Activated naive CD4-positive, alpha-beta T cell treated with anti-CD3 and anti-CD28 coated beads, Interleukin-2, amount 10 ng/mL, durations not matched to agents 7 days and 5 days (primary cell): ENCODE measurements at regions of chr1 and their contacts with region 1.

Region 1: GRCh38 chr1:225441314-225442122 is 13.7 kb upstream of the LBR start:
- DNase-seq: peak; percentile 41
- H3K4me3 Mint-ChIP-seq: peak overlapping the region; percentile 48
- H3K27ac Mint-ChIP-seq: peak overlapping the region; percentile 89
- H3K4me1 Mint-ChIP-seq: peaks cover 62% of the 10 kb centered on the region
- H3K27me3 Mint-ChIP-seq: peaks cover 3% of the 10 kb centered on the region

Region 2: GRCh38 chr1:225191199-225191753 is 250.2 kb before region 1 on chr1:
- CTCF ChIA-PET with region 1: no interaction called
- DNase-seq: no peak
- H3K4me3 Mint-ChIP-seq: no peak overlapping the region
- H3K27ac Mint-ChIP-seq: no peak overlapping the region
- H3K4me1 Mint-ChIP-seq: no peaks in the 10 kb centered on the region
- H3K27me3 Mint-ChIP-seq: no peaks in the 10 kb centered on the region

Region 3: GRCh38 chr1:225354906-225355305 is 86.6 kb before region 1 on chr1:
- CTCF ChIA-PET with region 1: no interaction called
- DNase-seq: no peak
- H3K4me3 Mint-ChIP-seq: no peak overlapping the region
- H3K27ac Mint-ChIP-seq: no peak overlapping the region
- H3K4me1 Mint-ChIP-seq: no peaks in the 10 kb centered on the region
- H3K27me3 Mint-ChIP-seq: peaks cover 19% of the 10 kb centered on the region

Region 4: DNA sequence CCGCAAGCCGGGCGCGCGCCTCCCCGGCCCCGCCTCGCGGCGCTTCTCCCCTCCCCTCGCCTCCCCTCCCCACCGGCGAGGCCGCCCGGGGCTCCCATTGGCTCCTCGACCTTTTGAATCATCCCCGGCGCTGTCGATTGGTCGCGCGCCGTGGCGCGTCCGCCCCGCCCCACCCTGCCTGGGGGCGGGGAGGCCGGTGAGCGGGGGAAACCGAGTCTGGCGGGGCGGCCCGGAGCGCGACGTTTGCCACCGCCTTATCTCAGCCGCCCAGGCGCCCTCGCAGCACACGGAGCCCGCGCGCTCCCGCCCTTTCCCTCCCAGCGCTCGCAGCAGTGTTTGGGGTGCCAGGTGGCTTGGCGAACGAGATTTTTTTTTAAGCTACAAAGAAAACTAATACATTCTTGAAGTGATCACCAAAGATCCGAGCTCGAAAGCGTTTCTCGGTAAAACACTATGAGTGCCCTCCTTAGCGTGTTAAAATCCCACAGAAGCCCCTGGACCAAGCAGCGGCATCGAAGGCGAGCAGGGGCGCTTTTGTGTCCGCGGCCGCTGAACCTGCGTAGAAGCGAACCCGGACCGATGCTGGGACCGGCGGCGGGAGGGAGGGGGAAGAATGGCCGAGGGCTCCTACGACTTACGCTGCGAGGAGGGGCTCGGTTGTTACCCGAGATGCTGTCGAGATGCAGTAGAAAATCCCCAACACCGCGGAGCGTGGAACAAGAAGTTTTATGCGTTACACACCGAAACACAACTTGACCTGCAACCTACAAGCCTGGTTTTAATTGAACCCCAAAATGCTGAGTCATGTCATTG is 13.2 kb before region 1 on chr1:
- CTCF ChIA-PET with region 1: interaction called, 18 read pairs
- DNase-seq: peak; percentile 93
- H3K4me3 Mint-ChIP-seq: peak overlapping the region; percentile 89
- H3K27ac Mint-ChIP-seq: peak overlapping the region; percentile 94
- H3K4me1 Mint-ChIP-seq: peaks cover 49% of the 10 kb centered on the region
- H3K27me3 Mint-ChIP-seq: peaks cover 8% of the 10 kb centered on the region

Region 5: GRCh38 chr1:225454733-225455132 is 13.2 kb after region 1 on chr1:
- CTCF ChIA-PET with region 1: interaction called, 12 read pairs
- DNase-seq: peak; percentile 43
- H3K4me3 Mint-ChIP-seq: no peak overlapping the region
- H3K27ac Mint-ChIP-seq: no peak overlapping the region
- H3K4me1 Mint-ChIP-seq: peaks cover 40% of the 10 kb centered on the region
- H3K27me3 Mint-ChIP-seq: peaks cover 1% of the 10 kb centered on the region

Region 6: GRCh38 chr1:225467193-225468020 is 25.9 kb after region 1 on chr1:
- CTCF ChIA-PET with region 1: interaction called, 11 read pairs
- DNase-seq: peak; percentile 93
- H3K4me3 Mint-ChIP-seq: peak overlapping the region; percentile 90
- H3K27ac Mint-ChIP-seq: peak overlapping the region; percentile 99
- H3K4me1 Mint-ChIP-seq: peaks cover 78% of the 10 kb centered on the region
- H3K27me3 Mint-ChIP-seq: no peaks in the 10 kb centered on the region

Region 7: DNA sequence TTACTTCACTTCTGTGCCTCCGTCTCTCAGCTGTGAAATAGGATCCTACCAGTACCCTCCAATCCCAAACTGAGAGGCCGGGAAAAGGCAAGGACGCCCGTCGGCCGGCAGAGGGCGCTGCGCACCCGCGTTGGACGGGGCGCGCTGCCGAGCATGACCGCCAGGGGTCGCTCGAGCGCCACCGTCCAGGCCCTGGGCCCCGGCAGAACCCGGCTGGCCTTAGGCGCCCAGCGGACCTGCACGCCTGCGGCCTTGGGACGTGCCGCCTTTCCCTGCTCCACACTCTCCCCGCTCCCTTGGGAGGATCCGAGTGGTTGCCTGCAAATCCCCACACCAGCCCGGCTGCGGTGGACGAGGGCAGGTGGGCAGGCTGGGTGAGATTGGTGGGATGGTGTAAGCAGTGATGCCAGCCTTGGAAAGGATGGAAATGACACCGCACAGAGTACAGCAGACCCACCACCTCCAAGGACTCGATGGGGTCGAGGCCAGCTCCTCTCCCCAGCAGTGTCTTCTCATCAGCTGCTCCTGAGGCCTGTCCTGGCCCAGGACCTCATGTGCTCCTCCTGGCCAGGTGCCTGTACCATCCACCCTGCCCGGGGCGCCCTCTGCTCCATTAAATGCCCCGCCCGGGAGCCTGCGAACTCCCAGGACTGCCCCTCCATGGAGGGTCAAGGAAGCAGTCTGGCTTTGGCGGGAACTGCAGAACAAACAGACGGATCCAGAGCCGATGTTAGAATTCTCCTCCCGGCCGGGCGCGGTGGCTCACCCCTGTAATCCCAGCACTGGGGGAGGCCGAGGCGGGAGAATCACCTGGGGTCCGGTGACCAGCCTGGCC is 33.7 kb after region 1 on chr1:
- CTCF ChIA-PET with region 1: interaction called, 11 read pairs
- DNase-seq: peak; percentile 63
- H3K4me3 Mint-ChIP-seq: no peak overlapping the region
- H3K27ac Mint-ChIP-seq: peak overlapping the region; percentile 68
- H3K4me1 Mint-ChIP-seq: peaks cover 67% of the 10 kb centered on the region
- H3K27me3 Mint-ChIP-seq: peaks cover 9% of the 10 kb centered on the region